Upper lobe of right lung (tissue), 1 donor: ENCODE measurements at regions of chr7 and their contacts with region 1.

Region 1: GRCh38 chr7:121081327-121081936 is 92.9 kb downstream of the CPED1 start:
- DNase-seq: no peak
- ATAC-seq: peak; percentile 86
- H3K4me3 ChIP-seq: no peak overlapping the region
- H3K27ac ChIP-seq: no peak overlapping the region
- H3K4me1 ChIP-seq: peaks cover 7% of the 10 kb centered on the region
- H3K27me3 ChIP-seq: no peaks in the 10 kb centered on the region
- CTCF ChIP-seq: peak; percentile 77

Region 2: DNA sequence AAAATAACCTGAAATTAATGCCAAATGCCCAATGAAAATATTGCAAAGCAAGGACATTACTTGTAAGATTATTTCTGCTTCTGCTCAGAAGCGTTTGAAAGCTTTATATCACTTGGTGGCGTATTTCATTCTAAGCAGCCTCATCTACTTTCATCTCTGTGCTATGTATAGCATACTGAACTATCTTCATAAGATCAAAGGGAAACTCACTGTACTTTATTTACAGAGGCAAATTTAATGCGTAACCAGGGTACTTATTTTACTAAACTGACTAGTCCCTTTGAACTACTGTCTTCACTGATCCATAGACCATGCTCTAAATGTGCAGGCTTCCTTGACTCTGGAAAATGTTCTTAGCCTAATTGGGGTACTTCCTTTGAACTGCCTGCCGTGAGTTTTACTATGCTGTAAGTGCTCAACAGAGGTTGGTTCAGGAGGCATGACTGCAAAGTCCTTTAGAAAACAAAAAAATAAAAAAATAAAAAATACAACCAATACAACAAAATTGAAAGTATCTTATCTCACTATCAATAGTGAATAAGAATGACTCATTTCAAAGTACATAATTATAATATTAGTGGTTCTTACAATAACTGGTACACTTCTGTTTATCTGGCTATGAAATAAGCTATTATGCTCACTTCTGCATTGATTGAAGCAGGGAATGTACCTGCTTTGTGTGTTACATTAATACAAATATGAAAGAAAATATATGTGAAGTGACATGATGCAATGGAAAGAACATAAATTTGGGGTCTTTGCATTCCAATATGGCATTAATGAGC is 182.5 kb before region 1 on chr7:
- intact Hi-C with region 1: no loop called
- DNase-seq: no peak
- ATAC-seq: no peak
- H3K4me3 ChIP-seq: no peak overlapping the region
- H3K27ac ChIP-seq: no peak overlapping the region
- H3K4me1 ChIP-seq: no peaks in the 10 kb centered on the region
- H3K27me3 ChIP-seq: no peaks in the 10 kb centered on the region
- CTCF ChIP-seq: no peak

Region 3: GRCh38 chr7:120987683-120988590 is 93.5 kb before region 1 on chr7:
- intact Hi-C with region 1: loop called (anchors 5 kb)
- DNase-seq: peak; percentile 93
- ATAC-seq: peak; percentile 98
- H3K4me3 ChIP-seq: peak overlapping the region; percentile 48
- H3K27ac ChIP-seq: peak overlapping the region; percentile 65
- H3K4me1 ChIP-seq: peaks cover 9% of the 10 kb centered on the region
- H3K27me3 ChIP-seq: no peaks in the 10 kb centered on the region
- CTCF ChIP-seq: peak; percentile 98